ENCODE measurements at regions of chr9 and their contacts with region 1.

Region 1: GRCh38 chr9:37119907-37120842 is at the start of gene ZCCHC7:
- DNase-seq: peak; percentile 98
- ATAC-seq: peak; percentile 97
- H3K4me3 Mint-ChIP-seq: peak within 1 kb of the TSS; percentile 90
- H3K27ac Mint-ChIP-seq: peak within 1 kb of the TSS; percentile 97
- H3K4me1 Mint-ChIP-seq: peaks cover 23% of the 10 kb centered on the region
- H3K27me3 Mint-ChIP-seq: no peaks in the 10 kb centered on the region
- total RNA-seq, gene ZCCHC7: 22.3 to 24.5 TPM

Region 2: DNA sequence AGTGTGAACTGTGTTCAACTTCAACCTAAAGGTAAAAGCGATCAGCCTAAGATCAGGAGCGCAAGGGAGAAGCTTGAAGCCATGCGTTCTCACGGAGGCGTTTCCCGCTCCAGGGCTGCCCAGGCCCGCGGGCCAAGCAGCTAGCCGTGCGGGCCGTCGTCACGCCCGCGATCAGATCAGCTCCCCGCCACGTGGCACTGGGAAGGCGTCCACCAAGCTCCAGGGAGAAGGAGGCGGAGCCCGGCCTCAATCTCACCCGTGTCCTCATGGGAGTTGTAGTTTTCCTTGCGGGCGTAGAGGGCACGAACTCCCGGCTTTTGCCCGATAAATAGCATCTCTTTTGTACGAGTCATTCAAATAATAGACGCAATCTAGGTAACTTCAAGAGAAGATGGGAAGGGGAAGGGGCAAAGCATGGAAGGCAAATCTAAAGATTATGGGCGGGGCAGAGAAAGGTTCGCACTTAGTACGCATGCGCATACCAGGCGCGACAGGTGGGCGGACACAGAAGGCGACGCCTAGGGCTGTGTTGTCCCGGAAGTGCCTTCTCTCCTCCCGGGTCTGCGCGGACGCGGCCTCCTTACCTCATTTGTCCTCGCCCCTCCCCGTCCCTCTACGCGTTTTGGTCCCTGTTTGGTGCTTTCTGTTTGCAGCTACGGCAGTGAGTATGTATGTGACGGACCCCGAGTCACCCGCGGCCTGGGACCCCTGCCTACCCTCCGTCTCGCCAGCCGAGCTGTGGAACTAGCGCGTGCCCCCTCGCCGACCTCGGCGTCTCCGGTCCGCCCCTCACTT is 40.6 kb before region 1 on chr9:
- CTCF ChIA-PET with region 1: interaction called, 10 read pairs
- POLR2A ChIA-PET with region 1: interaction called, 27 read pairs
- DNase-seq: peak; percentile 96
- ATAC-seq: peak; percentile 98
- H3K4me3 Mint-ChIP-seq: peak overlapping the region; percentile 96
- H3K27ac Mint-ChIP-seq: peak overlapping the region; percentile 95
- H3K4me1 Mint-ChIP-seq: peaks cover 45% of the 10 kb centered on the region
- H3K27me3 Mint-ChIP-seq: peaks cover 9% of the 10 kb centered on the region

Region 3: GRCh38 chr9:37102486-37102885 is 17.7 kb before region 1 on chr9:
- CTCF ChIA-PET with region 1: no interaction called
- POLR2A ChIA-PET with region 1: no interaction called
- DNase-seq: no peak
- ATAC-seq: no peak
- H3K4me3 Mint-ChIP-seq: no peak overlapping the region
- H3K27ac Mint-ChIP-seq: no peak overlapping the region
- H3K4me1 Mint-ChIP-seq: peaks cover 17% of the 10 kb centered on the region
- H3K27me3 Mint-ChIP-seq: no peaks in the 10 kb centered on the region

Region 4: DNA sequence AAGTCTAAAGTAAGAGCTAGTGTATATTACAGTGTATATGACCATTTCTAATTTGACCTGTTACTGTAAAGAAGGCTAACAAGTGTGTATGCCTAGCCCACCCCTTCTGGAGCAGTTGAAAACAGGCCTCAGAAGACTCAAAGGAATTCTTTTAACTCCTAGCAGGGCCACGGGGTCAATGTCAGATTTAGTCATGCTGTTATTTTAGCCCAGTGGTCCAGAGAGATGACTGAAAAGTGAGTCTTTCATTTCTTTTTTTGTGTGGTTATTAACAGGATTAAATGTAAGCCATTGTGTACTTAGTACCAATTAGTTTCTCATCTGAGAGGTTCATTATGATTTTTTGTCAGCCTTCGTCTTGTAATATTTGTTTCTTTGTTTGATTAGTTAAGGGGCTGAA is 24.6 kb after region 1 on chr9:
- CTCF ChIA-PET with region 1: interaction called, 3 read pairs
- POLR2A ChIA-PET with region 1: interaction called, 20 read pairs
- DNase-seq: no peak
- ATAC-seq: no peak
- H3K4me3 Mint-ChIP-seq: no peak overlapping the region
- H3K27ac Mint-ChIP-seq: no peak overlapping the region
- H3K4me1 Mint-ChIP-seq: peaks cover 31% of the 10 kb centered on the region
- H3K27me3 Mint-ChIP-seq: no peaks in the 10 kb centered on the region

Region 5: DNA sequence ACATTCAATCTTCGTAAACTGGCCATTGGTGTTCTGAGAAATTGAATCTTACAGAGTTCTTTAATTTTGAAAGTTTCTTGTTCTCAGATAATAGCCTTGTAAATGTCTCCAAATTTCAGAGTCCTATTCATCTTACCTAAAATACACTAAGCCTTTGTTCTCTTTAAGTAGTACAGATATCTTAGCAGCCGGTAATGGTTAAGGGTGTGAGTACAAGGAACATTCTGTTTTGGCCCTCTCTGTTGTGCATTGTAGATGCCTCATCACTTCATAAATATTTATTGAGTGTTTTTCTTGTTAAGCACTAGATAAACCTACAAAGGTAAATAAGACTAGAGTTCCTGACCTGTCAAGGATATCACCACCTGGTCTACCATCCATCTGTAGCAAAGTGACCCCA is 35.4 kb after region 1 on chr9:
- CTCF ChIA-PET with region 1: no interaction called
- POLR2A ChIA-PET with region 1: no interaction called
- DNase-seq: no peak
- ATAC-seq: no peak
- H3K4me3 Mint-ChIP-seq: no peak overlapping the region
- H3K27ac Mint-ChIP-seq: no peak overlapping the region
- H3K4me1 Mint-ChIP-seq: peaks cover 7% of the 10 kb centered on the region
- H3K27me3 Mint-ChIP-seq: no peaks in the 10 kb centered on the region

Region 6: GRCh38 chr9:37302277-37302676 is 182.1 kb after region 1 on chr9:
- CTCF ChIA-PET with region 1: interaction called, 4 read pairs
- POLR2A ChIA-PET with region 1: interaction called, 14 read pairs
- DNase-seq: peak; percentile 77
- ATAC-seq: peak; percentile 96
- H3K4me3 Mint-ChIP-seq: peak overlapping the region; percentile 69
- H3K27ac Mint-ChIP-seq: peak overlapping the region; percentile 91
- H3K4me1 Mint-ChIP-seq: peaks cover 59% of the 10 kb centered on the region
- H3K27me3 Mint-ChIP-seq: no peaks in the 10 kb centered on the region

Measured in activated CD8-positive, alpha-beta T cell treated with anti-CD3 and anti-CD28 coated beads, Interleukin-2, amount 10 ng/mL, durations not matched to agents 7 days and 5 days (primary cell).